Gastrocnemius medialis (tissue), 4 donors: ENCODE measurements at regions of chr20 and their contacts with region 1.

Region 1: GRCh38 chr20:208942-209566 is 18.0 kb upstream of the DEFB129 start:
- DNase-seq: no peak
- ATAC-seq: peak in 1 of 2 donors; percentile 66
- H3K4me3 ChIP-seq: no peak overlapping the region
- H3K27ac ChIP-seq: no peak overlapping the region
- H3K4me1 ChIP-seq: no peaks in the 10 kb centered on the region
- H3K27me3 ChIP-seq: no peaks in the 10 kb centered on the region
- CTCF ChIP-seq: peak in 2 of 5 experiments; percentile 22 to 35
- POLR2A ChIP-seq: no peak

Region 2: DNA sequence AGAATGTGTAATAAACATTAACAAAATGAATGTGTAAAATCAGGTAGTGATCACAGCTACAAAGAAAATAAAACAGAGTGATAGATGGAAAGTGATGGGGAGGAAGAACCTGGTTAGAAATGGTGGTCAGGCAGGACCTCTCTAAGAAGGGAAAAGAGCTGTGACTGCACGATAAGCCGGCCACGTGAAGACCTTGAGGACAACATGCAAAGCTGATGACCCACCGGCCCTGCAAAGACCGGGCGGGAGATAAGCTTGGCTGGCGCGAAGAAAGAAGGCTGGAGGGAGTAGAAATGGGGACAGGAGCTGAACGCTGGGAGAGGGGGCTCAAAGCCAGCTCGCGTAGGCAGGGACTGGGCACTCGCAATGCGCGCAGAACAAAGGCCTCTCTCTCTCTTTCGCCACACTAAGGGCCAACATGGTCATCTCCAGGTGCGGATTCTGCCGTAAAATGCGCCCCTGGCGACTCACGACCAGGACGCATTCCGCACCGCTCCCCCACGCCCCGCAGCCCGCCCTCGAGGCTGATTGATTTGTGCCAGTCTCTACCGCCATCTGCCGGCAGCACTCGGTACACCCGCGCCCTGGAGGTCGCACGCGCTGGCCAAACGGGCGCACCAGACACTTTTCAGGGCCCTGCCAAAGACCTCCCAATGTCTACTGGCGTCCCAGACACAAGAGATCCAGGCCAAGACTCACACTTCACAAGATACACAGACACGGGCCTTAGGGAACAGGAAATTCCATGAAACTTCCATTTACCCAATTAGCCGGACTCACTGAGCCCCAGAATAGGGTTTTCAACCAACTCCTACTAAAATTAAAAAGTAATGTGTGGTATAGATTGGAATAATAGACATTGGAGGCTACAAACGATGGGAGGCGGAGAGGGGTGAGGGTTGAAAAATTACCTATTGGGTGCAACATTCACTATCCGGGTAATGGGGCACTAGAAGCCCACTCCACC is 57.8 kb after region 1 on chr20:
- in situ Hi-C with region 1: loop called in 1 of 4 experiments (anchors 10 kb)
- intact Hi-C with region 1: no loop called
- DNase-seq: peak; percentile 44 to 57
- ATAC-seq: peak; percentile 87 to 91
- H3K4me3 ChIP-seq: peak overlapping the region; percentile 47 to 61 (median 54)
- H3K27ac ChIP-seq: no peak overlapping the region
- H3K4me1 ChIP-seq: no peaks in the 10 kb centered on the region
- H3K27me3 ChIP-seq: no peaks in the 10 kb centered on the region
- CTCF ChIP-seq: peak; percentile 88 to 98 (median 92)
- POLR2A ChIP-seq: no peak

Region 3: GRCh38 chr20:324177-325044 is 115.4 kb after region 1 on chr20:
- in situ Hi-C with region 1: no loop called
- intact Hi-C with region 1: loop called (anchors 5 kb)
- DNase-seq: peak; percentile 80 to 87
- ATAC-seq: peak; percentile 77 to 80
- H3K4me3 ChIP-seq: peak overlapping the region; percentile 67 to 73 (median 70)
- H3K27ac ChIP-seq: peak overlapping the region; percentile 80 to 93 (median 86)
- H3K4me1 ChIP-seq: peaks cover 5% of the 10 kb centered on the region in 2 donors
- H3K27me3 ChIP-seq: peaks cover 0 to 7% (median 2%) of the 10 kb centered on the region in 3 donors
- CTCF ChIP-seq: peak in 3 of 5 experiments; percentile 16 to 42 (median 25)
- POLR2A ChIP-seq: peak; percentile 83 to 84

Region 4: GRCh38 chr20:330233-331149 is 121.4 kb after region 1 on chr20:
- in situ Hi-C with region 1: loop called in 1 of 4 experiments (anchors 10 kb)
- intact Hi-C with region 1: loop called (anchors 5 kb)
- DNase-seq: no peak
- ATAC-seq: peak; percentile 34 to 70
- H3K4me3 ChIP-seq: no peak overlapping the region
- H3K27ac ChIP-seq: no peak overlapping the region
- H3K4me1 ChIP-seq: peaks cover 5% of the 10 kb centered on the region in 2 donors
- H3K27me3 ChIP-seq: peaks cover 0 to 7% (median 2%) of the 10 kb centered on the region in 3 donors
- CTCF ChIP-seq: peak; percentile 65 to 91 (median 82)
- POLR2A ChIP-seq: no peak